Activated CD8-positive, alpha-beta T cell treated with anti-CD3 and anti-CD28 coated beads for 36 hours (primary cell): ENCODE measurements at regions of chr6 and their contacts with region 1.

Region 1: GRCh38 chr6:135586841-135587240 is 89.3 kb upstream of the AHI1 start:
- DNase-seq: peak; percentile 72
- ATAC-seq: peak; percentile 75
- H3K4me3 Mint-ChIP-seq: no peak overlapping the region
- H3K27ac Mint-ChIP-seq: peak overlapping the region; percentile 80
- H3K4me1 Mint-ChIP-seq: peaks cover 39% of the 10 kb centered on the region
- H3K27me3 Mint-ChIP-seq: no peaks in the 10 kb centered on the region
- CTCF ChIP-seq: no peak

Region 2: DNA sequence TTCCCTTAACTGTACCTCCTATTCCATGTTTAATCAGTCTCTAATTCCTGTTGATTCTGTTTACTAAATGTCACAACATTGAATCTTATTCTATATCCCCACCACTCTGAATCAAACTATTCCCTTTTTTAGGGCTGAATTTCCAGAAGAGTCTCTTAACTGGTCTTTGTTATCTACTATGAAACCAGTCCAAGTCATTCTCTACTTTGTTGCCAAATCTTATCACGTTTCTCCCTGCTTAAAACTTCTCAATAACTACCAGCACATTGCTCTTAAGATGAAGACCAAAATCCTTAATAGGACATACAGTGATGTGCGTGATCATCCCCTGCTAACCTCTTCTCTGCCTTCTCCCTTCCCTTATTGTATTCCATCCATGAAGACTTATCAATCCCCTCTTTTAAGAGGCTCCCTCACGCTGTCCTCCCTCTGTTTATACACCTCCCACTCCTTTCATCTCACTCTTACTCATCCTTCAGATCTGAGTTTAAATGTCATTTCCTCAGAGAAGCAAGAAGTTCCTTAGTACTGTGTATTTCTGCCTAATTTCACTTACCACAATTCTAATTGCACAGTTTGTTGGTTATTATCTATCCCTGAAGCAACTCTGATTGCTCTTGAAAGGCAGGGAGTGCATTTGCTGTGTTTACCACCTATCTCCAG is 53.7 kb after region 1 on chr6:
- CTCF ChIA-PET with region 1: no interaction called
- POLR2A ChIA-PET with region 1: no interaction called
- intact Hi-C with region 1: loop called (anchors 5 kb)
- DNase-seq: peak; percentile 37
- ATAC-seq: peak; percentile 91
- H3K4me3 Mint-ChIP-seq: peak overlapping the region; percentile 15
- H3K27ac Mint-ChIP-seq: peak overlapping the region; percentile 80
- H3K4me1 Mint-ChIP-seq: peaks cover 48% of the 10 kb centered on the region
- H3K27me3 Mint-ChIP-seq: no peaks in the 10 kb centered on the region
- CTCF ChIP-seq: no peak